MCF 10A (cell line): ENCODE measurements at regions of chr1 and their contacts with region 1.

Region 1: DNA sequence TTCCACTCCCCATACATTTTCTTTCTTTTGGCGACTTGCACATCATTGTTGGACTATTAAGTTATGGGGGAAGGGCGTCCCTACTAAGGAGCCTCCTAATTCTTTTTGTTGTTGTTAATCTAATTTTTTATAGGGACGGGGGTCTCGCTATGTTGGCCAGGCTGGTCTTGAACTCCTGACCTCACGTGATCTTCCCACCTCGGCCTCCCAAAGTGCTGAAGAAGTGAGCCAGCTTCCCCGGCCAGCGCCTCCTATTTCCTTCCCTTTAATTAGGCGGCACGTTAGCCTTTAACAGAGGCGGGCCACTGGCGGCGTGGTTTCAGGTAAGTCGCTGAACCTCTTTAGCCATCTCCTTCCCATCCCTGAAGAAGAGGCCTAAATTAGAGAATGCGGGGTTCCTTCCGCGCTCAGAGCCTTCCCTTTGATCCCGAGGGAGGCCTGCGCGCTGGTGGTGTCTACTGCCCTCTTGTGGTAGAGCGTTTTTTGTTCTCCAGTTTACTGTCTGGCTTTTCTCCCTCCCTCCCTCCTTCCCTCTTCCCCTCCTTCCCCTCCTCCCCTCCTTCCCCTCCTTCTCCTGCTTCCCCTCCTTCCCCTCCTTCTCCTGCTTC is 38.1 kb downstream of the TNFRSF9 start:
- DNase-seq: peak; percentile 73
- H3K4me3 Mint-ChIP-seq: no peak overlapping the region
- H3K27ac Mint-ChIP-seq: no peak overlapping the region
- H3K4me1 Mint-ChIP-seq: no peaks in the 10 kb centered on the region
- H3K27me3 Mint-ChIP-seq: no peaks in the 10 kb centered on the region
- CTCF ChIP-seq: peak; percentile 86

Region 2: GRCh38 chr1:7808253-7808844 is 94.2 kb before region 1 on chr1:
- CTCF ChIA-PET with region 1: interaction called, 9 read pairs
- POLR2A ChIA-PET with region 1: interaction called, 3 read pairs
- intact Hi-C with region 1: loop called (anchors 1 kb)
- DNase-seq: peak; percentile 44
- H3K4me3 Mint-ChIP-seq: no peak overlapping the region
- H3K27ac Mint-ChIP-seq: no peak overlapping the region
- H3K4me1 Mint-ChIP-seq: no peaks in the 10 kb centered on the region
- H3K27me3 Mint-ChIP-seq: no peaks in the 10 kb centered on the region
- CTCF ChIP-seq: peak; percentile 60